HepG2 (cell line): ENCODE measurements at regions of chr10 and their contacts with region 1.

Region 1: GRCh38 chr10:57716886-57717285 is 550.8 kb downstream of the IPMK start:
- DNase-seq: no peak
- ATAC-seq: no peak
- H3K4me3 ChIP-seq: no peak overlapping the region
- H3K27ac ChIP-seq: no peak overlapping the region
- H3K4me1 ChIP-seq: no peaks in the 10 kb centered on the region
- H3K27me3 ChIP-seq: no peaks in the 10 kb centered on the region
- CTCF ChIP-seq: peak; percentile 28
- EP300 ChIP-seq: no peak
- POLR2A ChIP-seq: no peak
- RAD21 ChIP-seq: no peak

Region 2: GRCh38 chr10:58152673-58153263 is 435.9 kb after region 1 on chr10:
- CTCF ChIA-PET with region 1: no interaction called
- POLR2A ChIA-PET with region 1: no interaction called
- in situ Hi-C with region 1: no loop called
- intact Hi-C with region 1: loop called (anchors 1 kb)
- DNase-seq: peak; percentile 51
- ATAC-seq: peak; percentile 54; the same call in 2 of the 3 replicates
- H3K4me3 ChIP-seq: no peak overlapping the region
- H3K27ac ChIP-seq: no peak overlapping the region
- H3K4me1 ChIP-seq: peaks cover 33% of the 10 kb centered on the region
- H3K27me3 ChIP-seq: no peaks in the 10 kb centered on the region
- CTCF ChIP-seq: peak; percentile 67
- EP300 ChIP-seq: no peak
- POLR2A ChIP-seq: no peak
- RAD21 ChIP-seq: peak; percentile 32